ENCODE measurements at regions of chr17 and their contacts with region 1.

Region 1: GRCh38 chr17:28726226-28727130 is at the start of gene TLCD1:
- DNase-seq: peak; percentile 97
- H3K4me3 ChIP-seq: peak within 1 kb of the TSS; percentile 59
- H3K27ac ChIP-seq: peak within 1 kb of the TSS; percentile 79
- H3K4me1 ChIP-seq: peaks cover 46% of the 10 kb centered on the region
- H3K27me3 ChIP-seq: no peaks in the 10 kb centered on the region
- CTCF ChIP-seq: peak; percentile 99
- total RNA-seq, gene TLCD1: 3.8 and 7.8 TPM in 2 replicates

Region 2: DNA sequence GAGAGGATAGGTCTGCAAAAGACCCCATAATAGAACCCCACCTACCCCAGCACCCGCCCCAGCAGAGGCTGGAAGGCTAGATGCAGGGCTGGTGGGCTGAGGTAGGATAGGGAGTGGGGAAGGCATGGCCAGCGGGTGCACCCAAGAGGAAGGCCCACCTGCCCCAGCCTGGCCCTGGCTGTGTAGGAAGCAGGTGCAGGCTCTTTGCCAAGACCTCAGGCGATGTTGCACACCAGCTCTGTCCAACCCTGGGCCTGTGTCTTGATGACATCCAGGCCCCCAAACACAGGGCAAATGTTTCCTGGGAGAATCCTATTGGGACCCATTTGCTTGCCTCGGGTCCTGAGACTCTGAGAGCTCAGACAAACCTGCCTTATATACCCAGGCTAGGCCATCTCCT is 186.2 kb before region 1 on chr17:
- CTCF ChIA-PET with region 1: interaction called, 10 read pairs
- POLR2A ChIA-PET with region 1: no interaction called
- intact Hi-C with region 1: no loop called
- DNase-seq: no peak
- H3K4me3 ChIP-seq: no peak overlapping the region
- H3K27ac ChIP-seq: no peak overlapping the region
- H3K4me1 ChIP-seq: no peaks in the 10 kb centered on the region
- H3K27me3 ChIP-seq: no peaks in the 10 kb centered on the region
- CTCF ChIP-seq: no peak

Region 3: GRCh38 chr17:28750178-28751047 is 23.9 kb after region 1 on chr17:
- CTCF ChIA-PET with region 1: interaction called, 82 read pairs
- POLR2A ChIA-PET with region 1: interaction called, 4 read pairs
- intact Hi-C with region 1: loop called (anchors 2 kb)
- DNase-seq: peak; percentile 95
- H3K4me3 ChIP-seq: no peak overlapping the region
- H3K27ac ChIP-seq: no peak overlapping the region
- H3K4me1 ChIP-seq: peaks cover 21% of the 10 kb centered on the region
- H3K27me3 ChIP-seq: no peaks in the 10 kb centered on the region
- CTCF ChIP-seq: peak; percentile 99

Region 4: DNA sequence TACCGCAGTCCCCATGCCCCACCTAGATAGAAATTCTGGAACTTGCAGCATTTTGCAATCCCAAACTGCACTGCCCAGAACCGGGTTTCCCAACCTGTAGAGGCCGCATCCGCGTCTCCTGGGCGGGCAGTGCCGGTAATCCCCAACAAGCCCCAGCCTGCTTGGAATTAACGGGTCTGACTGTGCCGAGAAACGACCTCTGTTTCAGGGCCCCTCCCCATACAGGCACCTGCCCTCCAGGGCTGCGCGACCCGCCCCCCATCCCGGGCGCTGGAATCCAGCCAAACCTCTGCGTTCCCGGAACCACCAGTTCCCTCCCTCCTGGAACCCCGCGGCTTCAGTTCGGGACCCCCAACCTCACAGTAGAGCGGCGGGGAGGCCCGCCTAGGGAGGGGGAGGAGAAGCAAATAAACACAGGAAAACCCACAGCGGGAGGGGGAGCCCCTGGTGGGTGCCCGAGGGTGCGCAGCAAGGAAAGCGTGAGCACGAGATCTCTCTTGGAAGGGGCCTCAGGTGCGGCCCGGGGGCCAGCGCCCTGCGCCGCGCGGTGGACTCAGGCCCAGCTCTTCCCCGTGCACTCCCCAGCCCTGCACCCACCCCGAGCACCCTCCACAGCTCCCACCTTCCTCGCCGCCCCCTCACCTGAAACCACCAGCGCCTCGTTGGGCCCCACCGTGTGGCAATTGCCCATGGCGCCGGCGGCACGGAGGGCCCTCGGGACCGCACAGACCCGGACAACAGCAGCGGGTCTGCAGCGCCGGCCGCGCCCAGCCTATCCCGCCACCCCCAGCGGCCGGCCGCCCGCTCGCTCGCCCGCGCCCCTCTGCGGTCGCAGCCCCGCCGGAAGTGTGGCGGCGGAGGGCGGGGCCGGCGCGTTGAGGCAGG is 170.6 kb after region 1 on chr17 and contains the start of gene FLOT2:
- CTCF ChIA-PET with region 1: interaction called, 9 read pairs
- POLR2A ChIA-PET with region 1: no interaction called
- intact Hi-C with region 1: loop called (anchors 5 kb)
- DNase-seq: peak; percentile 75
- H3K4me3 ChIP-seq: peak within 1 kb of the TSS; percentile 85
- H3K27ac ChIP-seq: peak within 1 kb of the TSS; percentile 92
- H3K4me1 ChIP-seq: peaks cover 46% of the 10 kb centered on the region
- H3K27me3 ChIP-seq: no peaks in the 10 kb centered on the region
- CTCF ChIP-seq: peak; percentile 25; the same call in 1 of the 2 replicates
- total RNA-seq, gene FLOT2: 79.1 and 112 TPM in 2 replicates

Region 5: DNA sequence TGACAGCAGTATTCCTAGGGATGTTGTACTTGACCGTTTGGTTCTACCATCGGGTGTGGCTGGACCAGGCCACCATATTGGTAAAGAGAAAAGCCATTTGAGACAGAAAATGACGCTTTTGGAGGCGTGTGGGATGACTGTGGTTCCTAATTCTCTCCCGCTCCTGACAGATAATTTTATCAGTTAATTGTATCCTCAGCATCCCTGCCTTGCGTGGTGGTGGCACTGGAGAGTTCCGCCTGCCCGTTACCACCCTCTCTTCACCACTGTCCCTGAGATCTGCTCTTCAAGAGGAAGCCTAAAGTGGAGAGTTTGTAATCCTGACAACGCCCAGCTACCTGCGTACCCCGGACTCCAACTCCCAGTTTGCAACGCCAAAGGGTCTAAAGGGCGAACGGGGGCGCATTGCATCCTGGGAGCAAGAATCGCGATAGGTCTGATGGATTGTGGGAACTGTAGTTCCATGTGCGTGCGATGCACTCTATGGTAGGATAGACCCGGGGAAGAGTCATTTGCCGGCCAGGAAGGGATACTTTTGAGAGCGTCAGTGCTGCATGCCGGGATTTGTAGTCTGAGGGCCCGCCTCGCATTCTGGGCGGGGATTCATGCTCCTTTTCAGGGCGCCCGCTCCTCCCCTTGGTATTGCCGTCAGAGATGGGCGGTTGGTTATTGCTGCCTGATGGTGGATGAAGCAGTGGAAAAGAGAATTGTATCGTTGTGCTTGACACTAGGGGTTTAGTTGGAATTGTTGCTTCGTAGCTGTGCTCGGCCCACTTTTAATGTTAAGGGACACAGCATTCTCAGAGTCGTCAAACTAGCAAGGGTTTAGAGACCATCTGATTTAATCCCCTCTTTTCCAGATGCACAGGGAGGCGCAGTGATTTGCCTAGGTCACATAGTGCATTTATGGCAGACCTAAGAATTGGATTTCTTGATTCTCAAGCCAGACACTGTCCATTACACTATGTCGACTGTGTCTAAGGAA is 225.8 kb after region 1 on chr17:
- CTCF ChIA-PET with region 1: interaction called, 61 read pairs
- POLR2A ChIA-PET with region 1: interaction called, 3 read pairs
- intact Hi-C with region 1: loop called (anchors 1 kb)
- DNase-seq: peak; percentile 100
- H3K4me3 ChIP-seq: peak overlapping the region; percentile 88
- H3K27ac ChIP-seq: peak overlapping the region; percentile 95
- H3K4me1 ChIP-seq: peaks cover 23% of the 10 kb centered on the region
- H3K27me3 ChIP-seq: no peaks in the 10 kb centered on the region
- CTCF ChIP-seq: no peak

Region 6: GRCh38 chr17:29116804-29117772 is 390.6 kb after region 1 on chr17:
- CTCF ChIA-PET with region 1: interaction called, 34 read pairs
- POLR2A ChIA-PET with region 1: interaction called, 9 read pairs
- intact Hi-C with region 1: loop called (anchors 2 kb)
- DNase-seq: peak; percentile 86
- H3K4me3 ChIP-seq: no peak overlapping the region
- H3K27ac ChIP-seq: no peak overlapping the region
- H3K4me1 ChIP-seq: peaks cover 28% of the 10 kb centered on the region
- H3K27me3 ChIP-seq: no peaks in the 10 kb centered on the region
- CTCF ChIP-seq: peak; percentile 99

Measured in A673 (cell line).